Astrocyte of the cerebellum (primary cell): ENCODE measurements at regions of chr6 and their contacts with region 1.

Region 1: DNA sequence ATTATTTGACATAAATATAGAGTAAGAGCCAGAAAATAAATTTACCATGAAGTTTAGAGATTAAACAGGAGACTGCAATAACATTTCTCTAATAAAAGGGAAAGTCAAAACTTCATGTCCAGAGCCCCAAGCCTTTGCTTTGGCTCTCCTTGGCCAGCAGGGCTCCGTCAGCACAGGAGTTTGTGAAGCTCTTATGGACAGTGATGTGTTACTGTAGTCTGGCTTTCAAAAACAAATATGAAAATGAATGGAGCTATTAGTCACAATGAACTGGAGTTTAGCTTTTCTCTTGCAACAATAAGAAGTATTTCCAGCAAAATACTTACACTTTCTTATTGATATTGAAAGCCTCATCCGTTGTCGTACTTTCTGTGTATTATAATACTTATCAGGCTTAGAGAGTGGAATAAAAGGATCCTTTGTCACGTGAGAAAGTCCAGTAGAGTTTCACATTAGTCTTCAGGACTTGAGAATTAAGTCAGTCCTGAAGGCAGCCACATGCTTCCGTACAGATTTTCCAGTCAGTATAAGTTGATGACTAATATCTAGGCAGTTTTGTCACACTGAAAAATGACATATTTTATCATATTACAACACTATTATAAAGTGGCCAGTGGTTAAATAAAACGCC is 117.0 kb upstream of the PRL start:
- DNase-seq: peak; percentile 24
- H3K4me3 ChIP-seq: no peak overlapping the region
- CTCF ChIP-seq: peak; percentile 38

Region 2: DNA sequence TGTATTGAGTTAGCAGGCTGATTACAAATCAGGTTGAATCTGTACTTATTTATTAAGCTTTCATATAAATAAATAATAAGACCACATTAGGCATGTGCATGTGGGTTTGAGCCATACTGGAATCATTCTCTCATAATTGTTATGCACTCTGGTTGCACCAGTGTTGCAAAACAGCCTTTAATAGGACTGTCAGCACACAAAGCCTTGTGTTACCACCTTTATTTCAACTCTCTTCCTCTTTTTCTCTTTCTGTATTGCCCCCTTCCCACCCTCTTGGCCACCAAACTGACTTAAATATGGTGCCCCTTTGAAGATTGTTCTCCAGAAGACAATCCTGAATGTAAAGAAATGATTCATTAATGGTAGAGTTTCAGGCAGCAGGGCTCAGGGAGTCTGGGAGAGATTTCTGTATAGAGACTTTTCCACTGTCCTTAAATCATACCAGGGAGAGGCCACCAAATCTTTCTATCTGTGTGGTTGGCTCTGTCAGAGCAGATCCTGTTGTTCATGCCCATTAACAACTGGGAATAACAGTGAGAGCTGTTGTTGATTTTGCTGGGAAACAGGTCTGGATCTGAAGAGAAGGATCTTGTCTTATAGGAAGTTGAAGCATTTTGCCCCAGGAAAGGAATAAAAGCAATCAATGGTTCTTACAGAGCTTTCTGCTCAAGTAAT is 951.8 kb before region 1 on chr6:
- in situ Hi-C with region 1: no loop called
- DNase-seq: no peak
- H3K4me3 ChIP-seq: no peak overlapping the region
- CTCF ChIP-seq: no peak

Region 3: GRCh38 chr6:22236626-22237414 is 177.0 kb before region 1 on chr6:
- in situ Hi-C with region 1: no loop called
- DNase-seq: peak; percentile 48
- H3K4me3 ChIP-seq: no peak overlapping the region
- CTCF ChIP-seq: no peak

Region 4: GRCh38 chr6:22506496-22506895 is 92.7 kb after region 1 on chr6:
- in situ Hi-C with region 1: loop called (anchors 5 kb)
- DNase-seq: no peak
- H3K4me3 ChIP-seq: no peak overlapping the region
- CTCF ChIP-seq: no peak

Region 5: GRCh38 chr6:22737331-22737730 is 323.5 kb after region 1 on chr6:
- in situ Hi-C with region 1: no loop called
- DNase-seq: peak; percentile 19
- H3K4me3 ChIP-seq: no peak overlapping the region
- CTCF ChIP-seq: peak; percentile 66